SK-N-SH (cell line): ENCODE measurements at regions of chr3 and their contacts with region 1.

Region 1: GRCh38 chr3:70090322-70090913 is 90.9 kb downstream of the SAMMSON start:
- DNase-seq: peak; percentile 39
- H3K4me3 ChIP-seq: peak overlapping the region in 1 of 2 experiments; percentile 40; a peak in 1 of 4 replicates
- H3K27ac ChIP-seq: no peak overlapping the region
- H3K4me1 ChIP-seq: peaks cover 0 to 4% of the 10 kb centered on the region in 2 experiments; a peak in 2 of 4 replicates
- H3K27me3 ChIP-seq: no peaks in the 10 kb centered on the region
- CTCF ChIP-seq: peak; percentile 77
- EP300 ChIP-seq: no peak
- RAD21 ChIP-seq: peak; percentile 83

Region 2: DNA sequence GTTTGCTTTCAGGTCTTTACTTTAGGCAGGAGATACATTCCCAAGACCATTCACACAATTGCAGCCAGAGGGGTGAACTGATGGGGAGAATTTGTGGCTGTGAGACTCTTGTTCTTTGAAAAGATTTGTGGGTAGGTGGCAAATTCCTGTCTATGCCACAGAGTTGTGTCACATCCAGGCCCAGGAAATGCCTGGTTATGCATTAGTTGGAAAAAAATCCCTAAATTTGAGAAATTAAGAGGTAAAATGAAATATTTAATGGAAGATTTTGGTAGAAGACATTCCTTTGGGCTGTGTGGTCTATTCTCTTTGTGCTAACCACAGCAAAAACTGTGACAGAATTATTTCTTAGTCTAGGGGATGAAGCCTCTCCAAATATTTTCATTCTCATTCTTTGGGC is 62.1 kb before region 1 on chr3:
- CTCF ChIA-PET with region 1: no interaction called
- POLR2A ChIA-PET with region 1: no interaction called
- DNase-seq: no peak
- H3K4me3 ChIP-seq: no peak overlapping the region
- H3K27ac ChIP-seq: no peak overlapping the region
- H3K4me1 ChIP-seq: no peaks in the 10 kb centered on the region
- H3K27me3 ChIP-seq: no peaks in the 10 kb centered on the region
- CTCF ChIP-seq: no peak
- EP300 ChIP-seq: no peak
- RAD21 ChIP-seq: no peak

Region 3: DNA sequence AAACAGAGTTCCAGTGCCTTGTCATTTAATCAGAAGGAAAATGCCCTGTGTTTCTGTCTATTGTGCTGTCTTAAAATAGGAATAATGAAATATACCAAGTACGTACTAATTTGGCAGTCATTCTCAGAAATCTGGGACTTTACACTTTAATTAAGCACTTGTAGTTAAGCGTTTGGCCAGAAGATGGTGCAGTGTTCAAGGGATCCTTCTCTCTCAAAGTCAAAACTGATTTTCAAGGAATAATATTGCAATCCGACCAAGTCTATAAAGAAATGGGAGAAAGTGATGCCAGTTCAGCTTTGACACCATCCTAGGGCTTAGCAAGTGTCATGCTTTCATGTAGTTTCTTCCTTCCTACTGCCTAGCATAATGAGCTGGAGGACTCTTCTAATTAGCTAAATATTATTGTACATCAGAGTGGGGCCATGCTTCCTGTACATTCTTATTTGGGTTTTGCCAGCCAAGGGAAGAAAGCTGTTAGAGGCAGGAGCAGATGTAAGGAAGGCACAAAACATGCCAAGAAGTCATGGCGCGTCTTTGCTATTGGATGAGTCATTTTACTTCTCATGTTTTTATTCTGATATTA is 26.1 kb before region 1 on chr3:
- CTCF ChIA-PET with region 1: interaction called, 13 read pairs
- POLR2A ChIA-PET with region 1: no interaction called
- DNase-seq: peak; percentile 8
- H3K4me3 ChIP-seq: peak overlapping the region in 1 of 2 experiments; percentile 5; a peak in 1 of 4 replicates
- H3K27ac ChIP-seq: no peak overlapping the region
- H3K4me1 ChIP-seq: no peaks in the 10 kb centered on the region
- H3K27me3 ChIP-seq: no peaks in the 10 kb centered on the region
- CTCF ChIP-seq: peak; percentile 75
- EP300 ChIP-seq: no peak
- RAD21 ChIP-seq: peak; percentile 83

Region 4: DNA sequence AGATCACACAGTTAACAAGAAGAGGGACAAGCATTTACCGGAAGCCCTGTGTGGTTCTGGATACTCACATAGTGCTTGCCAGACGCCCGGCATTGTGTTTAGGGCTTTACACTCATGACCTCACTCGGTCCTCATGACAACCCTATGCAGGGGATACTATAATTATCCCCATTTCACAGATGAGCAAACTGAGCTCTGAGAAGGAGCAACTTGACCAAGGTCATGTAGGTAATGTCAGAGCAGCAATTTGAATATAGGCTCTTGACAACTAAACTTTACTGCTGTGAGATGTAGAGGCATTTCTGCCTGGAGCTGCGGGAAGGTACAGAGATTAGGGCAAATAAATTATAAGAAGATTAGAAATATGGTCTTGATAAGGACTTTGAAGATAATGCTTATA is 20.9 kb before region 1 on chr3:
- CTCF ChIA-PET with region 1: interaction called, 13 read pairs
- POLR2A ChIA-PET with region 1: no interaction called
- DNase-seq: no peak
- H3K4me3 ChIP-seq: no peak overlapping the region
- H3K27ac ChIP-seq: no peak overlapping the region
- H3K4me1 ChIP-seq: no peaks in the 10 kb centered on the region
- H3K27me3 ChIP-seq: no peaks in the 10 kb centered on the region
- CTCF ChIP-seq: no peak
- EP300 ChIP-seq: no peak
- RAD21 ChIP-seq: no peak

Region 5: DNA sequence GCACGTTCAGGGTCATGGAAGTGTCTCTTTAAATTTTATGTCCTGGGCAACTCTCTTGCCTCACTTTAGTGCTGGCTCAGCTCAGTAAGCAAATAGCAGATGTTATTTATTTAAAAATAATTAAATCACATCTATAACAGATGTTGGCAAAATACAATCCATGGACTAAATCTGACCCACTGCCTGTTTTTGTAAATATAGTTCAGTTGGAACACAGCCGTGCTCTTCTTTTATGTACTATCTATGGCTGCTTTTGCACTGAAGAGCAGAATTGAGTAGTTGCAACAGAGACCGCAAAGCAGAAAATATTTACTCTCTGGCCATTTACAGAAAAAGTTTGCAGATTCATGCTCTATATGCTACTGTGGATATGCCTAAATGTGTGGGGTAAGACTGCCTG is 11.6 kb before region 1 on chr3:
- CTCF ChIA-PET with region 1: interaction called, 13 read pairs
- POLR2A ChIA-PET with region 1: no interaction called
- DNase-seq: no peak
- H3K4me3 ChIP-seq: no peak overlapping the region
- H3K27ac ChIP-seq: no peak overlapping the region
- H3K4me1 ChIP-seq: no peaks in the 10 kb centered on the region; a peak in 1 of 4 replicates
- H3K27me3 ChIP-seq: no peaks in the 10 kb centered on the region
- CTCF ChIP-seq: no peak
- EP300 ChIP-seq: peak in 1 of 2 experiments; percentile 21; a peak in 1 of 4 replicates
- RAD21 ChIP-seq: no peak

Region 6: GRCh38 chr3:70108072-70108471 is 17.7 kb after region 1 on chr3:
- CTCF ChIA-PET with region 1: interaction called, 73 read pairs
- POLR2A ChIA-PET with region 1: no interaction called
- DNase-seq: peak; percentile 17
- H3K4me3 ChIP-seq: peak overlapping the region in 1 of 2 experiments; percentile 23; a peak in 1 of 4 replicates
- H3K27ac ChIP-seq: no peak overlapping the region
- H3K4me1 ChIP-seq: no peaks in the 10 kb centered on the region
- H3K27me3 ChIP-seq: no peaks in the 10 kb centered on the region
- CTCF ChIP-seq: peak; percentile 62
- EP300 ChIP-seq: no peak
- RAD21 ChIP-seq: peak; percentile 29

Region 7: DNA sequence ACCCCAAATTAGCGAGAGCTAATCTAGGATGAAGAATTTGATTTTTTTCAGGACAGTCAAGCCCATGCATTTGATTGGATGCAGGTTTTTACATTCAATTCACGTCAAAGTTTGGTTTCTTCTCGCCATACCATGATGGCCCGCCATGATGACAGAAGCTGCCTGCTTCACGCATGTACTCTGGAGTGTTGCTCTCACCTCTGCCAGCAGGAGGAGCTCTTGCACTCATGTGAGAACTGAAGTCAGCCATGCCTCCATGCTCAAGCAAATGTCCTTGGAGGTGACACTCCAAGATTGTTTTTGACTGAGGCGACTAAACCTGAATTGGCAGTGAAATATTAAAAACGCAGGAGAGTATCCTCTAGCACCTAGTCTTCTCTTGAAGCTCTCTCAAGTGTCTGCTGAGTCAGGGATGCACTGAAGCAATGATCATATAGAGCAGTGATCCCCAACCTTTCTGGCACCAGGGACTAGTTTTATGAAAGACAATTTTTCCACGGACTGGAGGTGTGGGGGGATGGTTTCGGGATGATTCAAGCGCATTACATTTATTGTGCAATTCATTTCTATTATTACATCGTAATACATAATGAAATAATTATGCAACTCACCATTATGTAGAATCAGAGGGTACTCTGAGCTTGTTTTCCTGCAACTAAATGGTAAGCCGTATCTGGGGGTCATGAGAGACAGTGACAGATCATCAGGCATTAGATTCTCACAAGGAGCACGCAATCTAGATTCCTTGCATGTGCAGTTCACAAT is 30.1 kb after region 1 on chr3:
- CTCF ChIA-PET with region 1: interaction called, 14 read pairs
- POLR2A ChIA-PET with region 1: no interaction called
- DNase-seq: peak; percentile 29
- H3K4me3 ChIP-seq: no peak overlapping the region
- H3K27ac ChIP-seq: no peak overlapping the region
- H3K4me1 ChIP-seq: no peaks in the 10 kb centered on the region
- H3K27me3 ChIP-seq: no peaks in the 10 kb centered on the region
- CTCF ChIP-seq: peak; percentile 75
- EP300 ChIP-seq: no peak
- RAD21 ChIP-seq: peak; percentile 67

Region 8: DNA sequence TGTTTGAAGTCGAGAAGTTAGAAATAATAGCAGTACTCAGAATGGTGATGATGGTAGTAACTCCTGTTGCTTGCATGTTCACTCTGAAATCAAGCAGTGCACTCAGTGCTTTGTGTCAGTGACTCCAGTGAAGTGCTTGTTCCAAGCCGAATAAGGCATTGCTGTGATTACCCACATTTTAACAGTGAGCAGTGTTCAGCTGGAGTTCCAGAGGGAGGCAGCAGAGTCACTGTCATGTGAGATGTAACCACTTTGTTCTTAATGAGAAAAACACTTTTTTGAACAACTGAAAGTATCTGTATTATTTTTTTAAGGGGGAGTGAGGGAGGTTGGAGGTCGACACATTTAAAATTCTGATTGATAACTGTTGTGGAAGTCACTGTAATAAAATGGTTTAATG is 218.3 kb after region 1 on chr3:
- CTCF ChIA-PET with region 1: no interaction called
- POLR2A ChIA-PET with region 1: no interaction called
- DNase-seq: peak; percentile 11
- H3K4me3 ChIP-seq: no peak overlapping the region
- H3K27ac ChIP-seq: no peak overlapping the region
- H3K4me1 ChIP-seq: peaks cover 0 to 3% of the 10 kb centered on the region in 2 experiments; a peak in 2 of 4 replicates
- H3K27me3 ChIP-seq: no peaks in the 10 kb centered on the region
- CTCF ChIP-seq: peak; percentile 33
- EP300 ChIP-seq: no peak
- RAD21 ChIP-seq: peak; percentile 58

Region 9: DNA sequence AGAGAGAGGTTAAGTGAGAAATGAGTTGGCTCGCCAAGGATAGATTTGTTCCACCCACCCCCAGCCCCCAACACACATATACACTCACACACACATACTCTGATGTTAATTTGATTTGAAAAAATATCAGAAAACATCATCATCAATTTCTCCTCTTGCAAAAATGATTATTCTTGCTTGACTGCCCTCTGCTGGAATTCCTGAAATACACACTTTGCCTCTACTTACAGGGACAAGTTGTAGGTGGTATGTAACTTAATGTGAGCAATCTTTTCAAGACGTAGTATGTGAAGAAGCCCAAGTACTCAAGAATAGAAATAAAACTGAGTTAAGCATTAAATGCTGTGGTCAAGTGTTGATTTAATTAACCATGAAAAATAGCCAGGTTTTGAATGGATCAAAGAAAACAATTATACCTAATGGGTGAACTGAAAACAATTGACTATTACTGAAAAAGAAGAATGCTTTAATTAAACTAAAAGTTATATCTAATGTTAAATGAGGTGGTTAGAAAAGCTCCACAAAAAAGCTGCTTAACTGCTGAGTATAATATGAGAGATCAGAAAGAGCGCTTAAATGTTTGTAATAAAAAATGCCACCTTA is 268.7 kb after region 1 on chr3:
- CTCF ChIA-PET with region 1: interaction called, 114 read pairs
- POLR2A ChIA-PET with region 1: no interaction called
- DNase-seq: peak; percentile 14
- H3K4me3 ChIP-seq: no peak overlapping the region
- H3K27ac ChIP-seq: no peak overlapping the region
- H3K4me1 ChIP-seq: no peaks in the 10 kb centered on the region
- H3K27me3 ChIP-seq: no peaks in the 10 kb centered on the region
- CTCF ChIP-seq: peak; percentile 79
- EP300 ChIP-seq: no peak
- RAD21 ChIP-seq: peak; percentile 83